ENCODE measurements at regions of chr7 and their contacts with region 1.

Region 1: GRCh38 chr7:138161600-138162081 is 85.4 kb downstream of the AKR1D1 start:
- DNase-seq: peak; percentile 85 to 96
- H3K4me3 ChIP-seq: no peak overlapping the region
- H3K27ac ChIP-seq: no peak overlapping the region
- H3K4me1 ChIP-seq: peaks cover 0 to 4% (median 2%) of the 10 kb centered on the region in 4 donors
- H3K27me3 ChIP-seq: no peaks in the 10 kb centered on the region
- CTCF ChIP-seq: peak in 5 of 7 experiments; percentile 20 to 83 (median 65)
- EP300 ChIP-seq: no peak
- POLR2A ChIP-seq: no peak

Region 2: DNA sequence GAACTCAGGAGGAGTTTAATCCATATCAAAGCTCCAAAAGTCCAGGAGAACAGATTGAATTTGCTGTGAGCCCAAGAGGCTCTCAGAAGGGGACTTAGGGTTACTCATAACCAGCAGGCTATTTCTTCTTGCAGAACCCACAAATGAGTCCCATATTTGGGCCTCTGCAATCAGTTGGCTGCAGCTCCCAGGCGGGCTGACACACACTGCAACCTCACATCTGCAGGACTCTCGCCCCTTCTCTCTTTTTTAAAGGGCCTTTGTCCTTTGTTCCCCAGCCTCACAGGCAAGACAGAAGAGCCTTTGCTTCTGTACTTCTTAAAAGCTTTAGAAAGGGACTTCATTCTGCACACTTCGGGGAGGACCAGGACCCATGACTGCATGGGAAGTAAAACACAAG is 186.4 kb before region 1 on chr7:
- intact Hi-C with region 1: no loop called
- DNase-seq: peak in 1 of 2 donors; percentile 66
- H3K4me3 ChIP-seq: no peak overlapping the region
- H3K27ac ChIP-seq: peak overlapping the region in 4 of 5 donors; percentile 78 to 95 (median 84)
- H3K4me1 ChIP-seq: peaks cover 45 to 94% (median 72%) of the 10 kb centered on the region in 4 donors
- H3K27me3 ChIP-seq: no peaks in the 10 kb centered on the region
- CTCF ChIP-seq: no peak
- EP300 ChIP-seq: no peak
- POLR2A ChIP-seq: no peak

Region 3: GRCh38 chr7:138097064-138097741 is 64.4 kb before region 1 on chr7:
- intact Hi-C with region 1: no loop called
- DNase-seq: peak; percentile 57 to 63
- H3K4me3 ChIP-seq: no peak overlapping the region
- H3K27ac ChIP-seq: no peak overlapping the region
- H3K4me1 ChIP-seq: no peaks in the 10 kb centered on the region
- H3K27me3 ChIP-seq: no peaks in the 10 kb centered on the region
- CTCF ChIP-seq: peak in 3 of 7 experiments; percentile 14 to 20 (median 19)
- EP300 ChIP-seq: no peak
- POLR2A ChIP-seq: no peak

Region 4: GRCh38 chr7:138125598-138126111 is 36.0 kb before region 1 on chr7:
- intact Hi-C with region 1: no loop called
- DNase-seq: peak in 1 of 2 donors; percentile 27
- H3K4me3 ChIP-seq: no peak overlapping the region
- H3K27ac ChIP-seq: no peak overlapping the region
- H3K4me1 ChIP-seq: no peaks in the 10 kb centered on the region
- H3K27me3 ChIP-seq: no peaks in the 10 kb centered on the region
- CTCF ChIP-seq: no peak
- EP300 ChIP-seq: no peak
- POLR2A ChIP-seq: no peak

Region 5: DNA sequence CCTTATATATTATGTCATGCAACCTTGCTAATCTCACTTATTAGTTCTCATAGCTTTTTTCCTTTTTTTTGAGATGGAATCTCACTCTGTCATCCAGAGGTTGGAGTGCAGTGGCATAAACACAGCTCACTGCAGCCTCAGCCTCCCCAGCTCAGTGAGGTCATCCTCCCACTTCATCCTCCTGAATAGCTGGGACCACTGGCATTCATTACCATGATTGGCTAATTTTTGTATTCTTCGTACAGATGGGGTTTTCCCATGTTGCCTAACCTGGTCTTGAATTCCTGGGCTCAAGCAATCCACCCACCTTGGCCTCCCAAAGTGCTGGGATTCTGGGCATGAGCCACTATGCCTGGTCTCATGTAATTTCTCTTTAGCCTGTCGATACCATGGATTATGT is 209.3 kb after region 1 on chr7:
- intact Hi-C with region 1: no loop called
- DNase-seq: no peak
- H3K4me3 ChIP-seq: no peak overlapping the region
- H3K27ac ChIP-seq: no peak overlapping the region
- H3K4me1 ChIP-seq: no peaks in the 10 kb centered on the region
- H3K27me3 ChIP-seq: no peaks in the 10 kb centered on the region
- CTCF ChIP-seq: no peak
- EP300 ChIP-seq: no peak
- POLR2A ChIP-seq: no peak

Region 6: GRCh38 chr7:138741453-138741735 is 579.8 kb after region 1 on chr7:
- intact Hi-C with region 1: loop called (anchors 5 kb)
- DNase-seq: no peak
- H3K4me3 ChIP-seq: no peak overlapping the region
- H3K27ac ChIP-seq: no peak overlapping the region
- H3K4me1 ChIP-seq: peaks cover 0 to 3% (median 0%) of the 10 kb centered on the region in 4 donors
- H3K27me3 ChIP-seq: no peaks in the 10 kb centered on the region
- CTCF ChIP-seq: no peak
- EP300 ChIP-seq: no peak
- POLR2A ChIP-seq: no peak

Measured in stomach (tissue), 19 donors.